T-cell (primary cell): ENCODE measurements at regions of chr14 and their contacts with region 1.

Region 1: DNA sequence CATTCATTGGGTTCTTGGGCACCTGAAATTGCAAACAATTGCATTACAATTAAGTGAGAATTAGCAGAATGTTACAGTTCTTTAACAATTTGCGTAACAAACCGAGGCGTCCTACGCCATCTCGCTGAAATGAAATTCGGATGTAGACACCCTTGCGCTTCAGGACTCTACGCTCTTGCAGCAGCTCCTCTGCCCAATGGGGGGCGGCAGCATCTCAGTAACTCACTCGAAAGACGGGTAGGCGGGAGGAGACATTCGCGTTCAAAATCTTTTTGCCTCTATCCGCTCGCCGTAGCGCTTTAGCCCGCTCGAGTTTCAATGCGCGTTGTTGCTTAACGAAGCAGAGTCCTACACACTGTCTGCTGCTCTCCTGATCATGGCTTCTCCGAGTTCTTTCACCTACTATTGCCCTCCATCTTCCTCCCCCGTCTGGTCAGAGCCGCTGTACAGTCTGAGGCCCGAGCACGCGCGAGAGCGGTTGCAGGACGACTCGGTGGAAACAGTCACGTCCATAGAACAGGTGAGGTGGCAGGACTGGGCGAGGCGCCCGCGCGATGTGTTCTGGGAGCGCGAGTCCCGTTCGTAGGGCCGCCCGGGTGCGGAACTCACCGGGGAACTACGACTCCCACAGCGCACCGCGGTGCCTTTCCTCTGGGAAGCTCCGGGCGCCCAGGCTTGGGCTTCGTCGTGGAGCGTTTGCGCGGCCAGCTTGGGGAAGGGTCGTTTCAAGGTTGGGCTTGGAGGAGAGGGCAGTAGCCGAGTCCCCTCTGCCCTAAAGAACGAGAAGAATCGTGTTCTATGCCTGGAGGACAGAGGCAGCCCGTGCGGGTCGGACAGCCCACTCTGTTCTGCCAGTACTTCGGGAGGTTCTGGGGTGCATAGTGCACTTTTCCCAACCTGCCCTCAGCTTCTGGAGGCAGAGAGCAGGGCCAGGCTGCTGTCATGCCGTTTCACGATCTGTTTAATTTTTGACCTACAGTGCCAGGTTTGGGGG is at the start of gene FNTB:
- DNase-seq: peak; percentile 84 to 96 (median 92)
- ATAC-seq: peak; percentile 93 to 96 (median 94)
- H3K4me3 ChIP-seq: peak within 1 kb of the TSS; percentile 65 to 96
- H3K4me3 Mint-ChIP-seq: peak within 1 kb of the TSS; percentile 92 to 99 (median 97)
- H3K27ac ChIP-seq: peak within 1 kb of the TSS; percentile 71
- H3K27ac Mint-ChIP-seq: peak within 1 kb of the TSS; percentile 96
- H3K4me1 ChIP-seq: peaks cover 28 to 33% of the 10 kb centered on the region in 2 experiments
- H3K4me1 Mint-ChIP-seq: peaks cover 48 to 64% (median 60%) of the 10 kb centered on the region in 3 donors
- H3K27me3 ChIP-seq: no peaks in the 10 kb centered on the region
- H3K27me3 Mint-ChIP-seq: peaks cover 0 to 4% of the 10 kb centered on the region in 2 donors
- total RNA-seq, gene FNTB: 9.6 to 14.2 (median 10.4) TPM

Region 2: GRCh38 chr14:64952598-64953309 is 34.1 kb before region 1 on chr14:
- CTCF ChIA-PET with region 1: interaction called in 1 of 2 experiments, 3 read pairs
- POLR2A ChIA-PET with region 1: interaction called in 1 of 2 experiments, 21 read pairs
- DNase-seq: no peak
- ATAC-seq: peak in 1 of 4 experiments; percentile 10
- H3K4me3 ChIP-seq: no peak overlapping the region
- H3K4me3 Mint-ChIP-seq: no peak overlapping the region
- H3K27ac ChIP-seq: no peak overlapping the region
- H3K27ac Mint-ChIP-seq: peak overlapping the region in 1 of 2 donors; percentile 34
- H3K4me1 ChIP-seq: no peaks in the 10 kb centered on the region
- H3K4me1 Mint-ChIP-seq: peaks cover 4 to 19% (median 4%) of the 10 kb centered on the region in 3 donors
- H3K27me3 ChIP-seq: no peaks in the 10 kb centered on the region
- H3K27me3 Mint-ChIP-seq: no peaks in the 10 kb centered on the region

Region 3: DNA sequence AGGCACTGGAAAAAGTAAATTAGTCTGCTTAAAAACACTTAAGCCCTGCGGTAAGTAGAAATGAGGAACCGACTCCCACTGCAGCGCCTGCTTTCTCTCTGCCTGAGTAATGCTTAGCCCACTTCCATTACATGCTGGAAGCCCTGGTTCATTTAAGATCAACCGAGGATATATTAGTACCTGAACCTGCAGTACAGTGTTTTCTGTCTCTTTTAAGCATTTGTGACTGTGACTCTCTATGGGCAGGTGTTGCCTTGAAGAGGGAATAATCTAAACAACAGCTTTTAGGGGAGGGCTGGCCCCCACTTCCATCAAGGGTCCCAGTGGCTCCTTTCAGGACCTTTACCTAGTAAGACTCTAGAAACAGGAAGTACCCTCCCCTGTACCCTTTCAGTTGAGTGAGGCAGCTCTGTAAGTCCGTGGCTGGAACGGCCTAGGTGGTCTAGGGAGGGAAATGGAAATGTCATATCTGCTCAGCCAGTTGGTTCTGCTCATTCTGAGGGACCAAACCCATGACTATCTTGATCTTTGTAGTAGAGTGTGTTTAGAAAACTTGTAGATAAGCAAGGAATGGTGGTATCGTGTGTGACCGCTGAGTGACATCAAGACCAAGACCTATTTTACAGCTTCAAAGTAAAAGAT is 56.0 kb after region 1 on chr14:
- CTCF ChIA-PET with region 1: no interaction called
- POLR2A ChIA-PET with region 1: no interaction called
- DNase-seq: no peak
- ATAC-seq: no peak
- H3K4me3 ChIP-seq: no peak overlapping the region
- H3K4me3 Mint-ChIP-seq: no peak overlapping the region
- H3K27ac ChIP-seq: no peak overlapping the region
- H3K27ac Mint-ChIP-seq: no peak overlapping the region
- H3K4me1 ChIP-seq: peaks cover 1 to 3% of the 10 kb centered on the region in 2 experiments
- H3K4me1 Mint-ChIP-seq: peaks cover 7 to 13% (median 10%) of the 10 kb centered on the region in 3 donors
- H3K27me3 ChIP-seq: no peaks in the 10 kb centered on the region
- H3K27me3 Mint-ChIP-seq: no peaks in the 10 kb centered on the region

Region 4: GRCh38 chr14:66070509-66071319 is 1083.8 kb after region 1 on chr14:
- CTCF ChIA-PET with region 1: interaction called in 1 of 2 experiments, 10 read pairs
- POLR2A ChIA-PET with region 1: no interaction called
- DNase-seq: peak; percentile 8 to 79 (median 61)
- ATAC-seq: peak; percentile 73 to 86 (median 83)
- H3K4me3 ChIP-seq: no peak overlapping the region
- H3K4me3 Mint-ChIP-seq: no peak overlapping the region
- H3K27ac ChIP-seq: no peak overlapping the region
- H3K27ac Mint-ChIP-seq: no peak overlapping the region
- H3K4me1 ChIP-seq: no peaks in the 10 kb centered on the region
- H3K4me1 Mint-ChIP-seq: peaks cover 2 to 7% (median 5%) of the 10 kb centered on the region in 3 donors
- H3K27me3 ChIP-seq: peaks cover 0 to 4% of the 10 kb centered on the region in 2 experiments
- H3K27me3 Mint-ChIP-seq: peaks cover 4 to 7% of the 10 kb centered on the region in 2 donors